ENCODE measurements at regions of chr7 and their contacts with region 1.

Region 1: GRCh38 chr7:107563775-107564552 is at the starts of genes COG5 and DUS4L:
- DNase-seq: peak; percentile 69 to 78
- ATAC-seq: peak; percentile 96 to 97
- H3K4me3 ChIP-seq: peak within 1 kb of the TSS; percentile 78 to 99 (median 95)
- H3K27ac ChIP-seq: peak within 1 kb of the TSS; percentile 92 to 99 (median 98)
- H3K4me1 ChIP-seq: peaks cover 37 to 41% of the 10 kb centered on the region in 2 donors
- H3K27me3 ChIP-seq: no peaks in the 10 kb centered on the region
- CTCF ChIP-seq: no peak
- POLR2A ChIP-seq: peak; percentile 54 to 56
- total RNA-seq, gene COG5: 20.8 to 49.7 (median 25.7) TPM
- total RNA-seq, gene DUS4L: 3.1 to 5.8 (median 3.6) TPM

Region 2: GRCh38 chr7:107180378-107180777 is 383.6 kb before region 1 on chr7:
- in situ Hi-C with region 1: loop called in 1 of 4 experiments (anchors 25 kb)
- intact Hi-C with region 1: no loop called
- DNase-seq: no peak
- ATAC-seq: no peak
- H3K4me3 ChIP-seq: no peak overlapping the region
- H3K27ac ChIP-seq: peak overlapping the region; percentile 23 to 51 (median 38)
- H3K4me1 ChIP-seq: peaks cover 40 to 42% of the 10 kb centered on the region in 2 donors
- H3K27me3 ChIP-seq: no peaks in the 10 kb centered on the region
- CTCF ChIP-seq: no peak
- POLR2A ChIP-seq: no peak

Region 3: GRCh38 chr7:107201795-107202450 is 362.0 kb before region 1 on chr7:
- in situ Hi-C with region 1: loop called in 1 of 4 experiments (anchors 25 kb)
- intact Hi-C with region 1: loop called (anchors 10 kb)
- DNase-seq: peak; percentile 69 to 87
- ATAC-seq: peak; percentile 92 to 97
- H3K4me3 ChIP-seq: no peak overlapping the region
- H3K27ac ChIP-seq: peak overlapping the region; percentile 8 to 62 (median 28)
- H3K4me1 ChIP-seq: peaks cover 0 to 10% of the 10 kb centered on the region in 2 donors
- H3K27me3 ChIP-seq: no peaks in the 10 kb centered on the region
- CTCF ChIP-seq: peak; percentile 41 to 74 (median 55)
- POLR2A ChIP-seq: no peak

Region 4: DNA sequence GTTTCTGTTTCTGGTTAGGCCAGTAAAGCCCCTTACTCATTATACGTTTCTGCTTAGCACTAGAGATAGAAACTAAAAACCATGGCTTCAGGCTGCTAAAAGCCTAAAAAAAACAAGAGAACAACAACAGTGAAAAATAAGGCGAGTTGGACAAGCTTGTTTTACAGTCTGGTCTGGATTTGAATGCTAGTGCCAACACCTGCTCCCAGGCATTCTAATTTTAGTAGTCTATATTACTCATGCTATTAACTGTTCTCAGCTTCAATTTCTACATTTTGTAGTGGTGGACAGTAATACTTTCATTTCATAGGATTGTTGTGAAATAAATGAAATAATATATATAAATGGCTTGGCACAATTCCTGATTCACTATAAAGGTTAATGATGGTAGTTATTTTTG is 286.6 kb before region 1 on chr7:
- in situ Hi-C with region 1: no loop called
- intact Hi-C with region 1: loop called (anchors 1 kb)
- DNase-seq: peak; percentile 35 to 39
- ATAC-seq: peak; percentile 99 to 100
- H3K4me3 ChIP-seq: peak overlapping the region; percentile 15 to 32 (median 27)
- H3K27ac ChIP-seq: peak overlapping the region; percentile 59 to 83 (median 76)
- H3K4me1 ChIP-seq: peaks cover 14 to 25% of the 10 kb centered on the region in 2 donors
- H3K27me3 ChIP-seq: no peaks in the 10 kb centered on the region
- CTCF ChIP-seq: no peak
- POLR2A ChIP-seq: peak in 1 of 2 donors; percentile 8

Region 5: GRCh38 chr7:107614425-107614824 is 50.5 kb after region 1 on chr7:
- in situ Hi-C with region 1: no loop called
- intact Hi-C with region 1: loop called (anchors 5 kb)
- DNase-seq: no peak
- ATAC-seq: peak in 1 of 2 donors; percentile 40
- H3K4me3 ChIP-seq: no peak overlapping the region
- H3K27ac ChIP-seq: no peak overlapping the region
- H3K4me1 ChIP-seq: peaks cover 15 to 27% of the 10 kb centered on the region in 2 donors
- H3K27me3 ChIP-seq: no peaks in the 10 kb centered on the region
- CTCF ChIP-seq: no peak
- POLR2A ChIP-seq: no peak

Measured in gastrocnemius medialis (tissue), 4 donors.